ENCODE measurements at regions of chr2 and their contacts with region 1.

Region 1: GRCh38 chr2:173210270-173211196 is 134.9 kb downstream of the MAP3K20 start:
- DNase-seq: peak in 7 of 9 donors; percentile 10 to 59 (median 39)
- ATAC-seq: peak; percentile 88
- H3K4me3 ChIP-seq: no peak overlapping the region
- H3K4me3 Mint-ChIP-seq: no peak overlapping the region
- H3K27ac ChIP-seq: no peak overlapping the region
- H3K27ac Mint-ChIP-seq: no peak overlapping the region
- H3K4me1 ChIP-seq: no peaks in the 10 kb centered on the region
- H3K4me1 Mint-ChIP-seq: peaks cover 0 to 2% (median 0%) of the 10 kb centered on the region in 7 donors
- H3K27me3 ChIP-seq: no peaks in the 10 kb centered on the region
- H3K27me3 Mint-ChIP-seq: peaks cover 2 to 21% (median 14%) of the 10 kb centered on the region in 5 donors

Region 2: DNA sequence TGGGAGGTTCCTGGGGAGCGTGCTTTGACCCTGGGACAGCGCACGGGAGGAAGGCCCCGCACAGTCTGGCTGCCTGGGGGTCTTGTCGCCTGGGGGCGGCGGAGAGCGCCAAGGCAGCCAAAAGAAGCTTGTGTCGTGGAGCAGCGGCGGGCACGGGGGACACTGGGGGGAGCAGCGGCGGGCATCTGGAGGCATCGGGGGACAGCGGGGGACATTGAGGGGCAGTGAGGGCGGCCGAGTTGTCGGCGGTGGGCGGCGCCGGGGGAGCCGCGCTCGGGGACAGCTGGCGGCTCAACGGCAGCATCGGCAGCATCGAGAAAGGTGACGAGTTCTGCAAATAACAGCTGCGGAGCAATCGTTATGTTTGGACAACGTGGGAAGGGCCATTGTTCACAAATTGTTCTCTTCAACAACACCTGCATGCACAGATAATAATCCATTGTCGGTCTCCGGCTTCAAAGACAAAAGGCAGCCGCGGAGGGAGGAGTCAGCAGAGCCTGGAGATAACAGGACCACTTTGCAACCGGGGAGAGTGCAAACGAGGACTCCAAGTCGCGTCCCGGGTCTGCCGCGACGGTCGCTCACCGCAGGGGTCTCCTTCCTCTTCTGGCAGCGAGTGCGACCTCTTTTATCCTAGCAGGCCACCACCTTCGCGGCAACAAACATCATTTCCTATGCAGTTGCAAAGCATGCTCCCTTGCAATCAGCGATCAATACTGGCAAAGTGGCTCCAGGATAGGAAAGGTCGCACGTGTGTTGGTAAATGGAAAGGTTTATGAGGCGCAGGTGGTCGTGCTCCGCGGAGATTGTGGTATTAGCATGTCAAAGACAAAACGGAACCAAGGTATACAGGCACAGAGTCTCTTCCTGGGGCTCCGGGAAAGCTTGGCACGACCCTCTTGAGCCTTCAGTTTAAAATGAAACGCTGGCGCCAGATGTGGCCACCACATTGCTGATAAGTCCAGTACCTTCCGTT is 975.5 kb before region 1 on chr2:
- CTCF ChIA-PET with region 1: no interaction called
- POLR2A ChIA-PET with region 1: no interaction called
- intact Hi-C with region 1: no loop called
- DNase-seq: peak in 7 of 9 donors; percentile 18 to 51 (median 38)
- ATAC-seq: peak; percentile 68
- H3K4me3 ChIP-seq: peak overlapping the region; percentile 71
- H3K4me3 Mint-ChIP-seq: peak overlapping the region; percentile 82 to 97 (median 92)
- H3K27ac ChIP-seq: no peak overlapping the region
- H3K27ac Mint-ChIP-seq: peak overlapping the region in 6 of 9 donors; percentile 11 to 88 (median 60)
- H3K4me1 ChIP-seq: peaks cover 0 to 15% of the 10 kb centered on the region in 2 donors
- H3K4me1 Mint-ChIP-seq: peaks cover 14 to 25% (median 20%) of the 10 kb centered on the region in 7 donors
- H3K27me3 ChIP-seq: peaks cover 4 to 13% of the 10 kb centered on the region in 2 donors
- H3K27me3 Mint-ChIP-seq: peaks cover 4 to 72% (median 21%) of the 10 kb centered on the region in 5 donors

Region 3: GRCh38 chr2:172329774-172330671 is 880.5 kb before region 1 on chr2:
- CTCF ChIA-PET with region 1: no interaction called
- POLR2A ChIA-PET with region 1: no interaction called
- intact Hi-C with region 1: no loop called
- DNase-seq: peak in 4 of 9 donors; percentile 8 to 27 (median 18)
- ATAC-seq: no peak
- H3K4me3 ChIP-seq: no peak overlapping the region
- H3K4me3 Mint-ChIP-seq: peak overlapping the region in 4 of 10 donors; percentile 9 to 32 (median 32)
- H3K27ac ChIP-seq: no peak overlapping the region
- H3K27ac Mint-ChIP-seq: peak overlapping the region in 4 of 9 donors; percentile 15 to 67 (median 52)
- H3K4me1 ChIP-seq: peaks cover 0 to 7% of the 10 kb centered on the region in 2 donors
- H3K4me1 Mint-ChIP-seq: peaks cover 0 to 15% (median 8%) of the 10 kb centered on the region in 7 donors
- H3K27me3 ChIP-seq: no peaks in the 10 kb centered on the region
- H3K27me3 Mint-ChIP-seq: peaks cover 0 to 7% (median 0%) of the 10 kb centered on the region in 5 donors

Region 4: DNA sequence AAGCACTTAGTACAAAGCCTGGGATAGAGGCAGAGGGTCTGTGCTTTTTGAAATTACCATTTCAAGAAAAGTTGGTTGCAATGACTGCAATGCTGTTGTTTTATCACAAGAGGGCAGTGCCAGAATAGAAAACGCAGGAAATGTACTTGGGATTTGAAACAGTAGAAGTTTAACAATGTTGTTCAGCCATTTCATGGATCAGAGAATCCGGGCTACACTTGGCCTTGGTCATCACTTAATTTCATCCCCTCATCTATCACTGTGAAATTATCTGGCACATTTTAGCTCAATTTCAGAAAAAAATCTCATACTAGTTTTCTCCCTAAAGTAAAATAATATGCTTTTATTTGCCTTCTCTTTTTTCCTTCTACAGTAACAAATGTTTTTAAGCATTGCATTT is 404.0 kb before region 1 on chr2:
- CTCF ChIA-PET with region 1: interaction called, 4 read pairs
- POLR2A ChIA-PET with region 1: no interaction called
- intact Hi-C with region 1: loop called (anchors 1 to 10 kb)
- DNase-seq: peak in 5 of 9 donors; percentile 22 to 32 (median 26)
- ATAC-seq: no peak
- H3K4me3 ChIP-seq: no peak overlapping the region
- H3K4me3 Mint-ChIP-seq: no peak overlapping the region
- H3K27ac ChIP-seq: no peak overlapping the region
- H3K27ac Mint-ChIP-seq: no peak overlapping the region
- H3K4me1 ChIP-seq: no peaks in the 10 kb centered on the region
- H3K4me1 Mint-ChIP-seq: peaks cover 0 to 8% (median 0%) of the 10 kb centered on the region in 7 donors
- H3K27me3 ChIP-seq: no peaks in the 10 kb centered on the region
- H3K27me3 Mint-ChIP-seq: peaks cover 0 to 15% (median 0%) of the 10 kb centered on the region in 5 donors

Region 5: GRCh38 chr2:172972005-172972619 is 238.4 kb before region 1 on chr2:
- CTCF ChIA-PET with region 1: interaction called, 7 read pairs
- POLR2A ChIA-PET with region 1: no interaction called
- intact Hi-C with region 1: loop called in 1 of 2 experiments (anchors 1 kb)
- DNase-seq: peak in 5 of 9 donors; percentile 21 to 43 (median 31)
- ATAC-seq: peak; percentile 66
- H3K4me3 ChIP-seq: no peak overlapping the region
- H3K4me3 Mint-ChIP-seq: no peak overlapping the region
- H3K27ac ChIP-seq: no peak overlapping the region
- H3K27ac Mint-ChIP-seq: peak overlapping the region in 5 of 9 donors; percentile 4 to 94 (median 76)
- H3K4me1 ChIP-seq: no peaks in the 10 kb centered on the region
- H3K4me1 Mint-ChIP-seq: peaks cover 8 to 34% (median 21%) of the 10 kb centered on the region in 7 donors
- H3K27me3 ChIP-seq: no peaks in the 10 kb centered on the region
- H3K27me3 Mint-ChIP-seq: peaks cover 0 to 10% (median 6%) of the 10 kb centered on the region in 5 donors

Region 6: GRCh38 chr2:173027181-173028128 is 183.1 kb before region 1 on chr2:
- CTCF ChIA-PET with region 1: interaction called, 13 read pairs
- POLR2A ChIA-PET with region 1: no interaction called
- intact Hi-C with region 1: loop called (anchors 1 kb)
- DNase-seq: peak; percentile 20 to 75 (median 63)
- ATAC-seq: peak; percentile 91
- H3K4me3 ChIP-seq: no peak overlapping the region
- H3K4me3 Mint-ChIP-seq: no peak overlapping the region
- H3K27ac ChIP-seq: no peak overlapping the region
- H3K27ac Mint-ChIP-seq: no peak overlapping the region
- H3K4me1 ChIP-seq: no peaks in the 10 kb centered on the region
- H3K4me1 Mint-ChIP-seq: peaks cover 0 to 7% (median 3%) of the 10 kb centered on the region in 7 donors
- H3K27me3 ChIP-seq: no peaks in the 10 kb centered on the region
- H3K27me3 Mint-ChIP-seq: peaks cover 6 to 15% (median 9%) of the 10 kb centered on the region in 5 donors

Region 7: GRCh38 chr2:173090276-173090877 is 120.2 kb before region 1 on chr2:
- CTCF ChIA-PET with region 1: no interaction called
- POLR2A ChIA-PET with region 1: no interaction called
- intact Hi-C with region 1: loop called in 1 of 2 experiments (anchors 5 kb)
- DNase-seq: no peak
- ATAC-seq: no peak
- H3K4me3 ChIP-seq: no peak overlapping the region
- H3K4me3 Mint-ChIP-seq: no peak overlapping the region
- H3K27ac ChIP-seq: no peak overlapping the region
- H3K27ac Mint-ChIP-seq: no peak overlapping the region
- H3K4me1 ChIP-seq: no peaks in the 10 kb centered on the region
- H3K4me1 Mint-ChIP-seq: no peaks in the 10 kb centered on the region
- H3K27me3 ChIP-seq: no peaks in the 10 kb centered on the region
- H3K27me3 Mint-ChIP-seq: peaks cover 6 to 34% (median 10%) of the 10 kb centered on the region in 5 donors

Region 8: GRCh38 chr2:174914853-174915760 is 1704.6 kb after region 1 on chr2:
- CTCF ChIA-PET with region 1: no interaction called
- POLR2A ChIA-PET with region 1: no interaction called
- intact Hi-C with region 1: no loop called
- DNase-seq: no peak
- ATAC-seq: no peak
- H3K4me3 ChIP-seq: no peak overlapping the region
- H3K4me3 Mint-ChIP-seq: no peak overlapping the region
- H3K27ac ChIP-seq: no peak overlapping the region
- H3K27ac Mint-ChIP-seq: no peak overlapping the region
- H3K4me1 ChIP-seq: no peaks in the 10 kb centered on the region
- H3K4me1 Mint-ChIP-seq: no peaks in the 10 kb centered on the region
- H3K27me3 ChIP-seq: no peaks in the 10 kb centered on the region
- H3K27me3 Mint-ChIP-seq: no peaks in the 10 kb centered on the region